Gastrocnemius medialis (tissue), 4 donors: ENCODE measurements at regions of chr11 and their contacts with region 1.

Region 1: GRCh38 chr11:16605894-16606783 is 132.3 kb upstream of the C11orf58 start:
- DNase-seq: peak; percentile 90 to 92
- ATAC-seq: peak; percentile 52 to 54
- H3K4me3 ChIP-seq: peak overlapping the region; percentile 70 to 98 (median 94)
- H3K27ac ChIP-seq: peak overlapping the region; percentile 91 to 99 (median 96)
- H3K4me1 ChIP-seq: peaks cover 14 to 33% of the 10 kb centered on the region in 2 donors
- H3K27me3 ChIP-seq: peaks cover 0 to 3% (median 0%) of the 10 kb centered on the region in 3 donors
- CTCF ChIP-seq: peak; percentile 96 to 98 (median 97)
- POLR2A ChIP-seq: peak; percentile 81 to 89

Region 2: GRCh38 chr11:15819679-15820286 is 786.4 kb before region 1 on chr11:
- in situ Hi-C with region 1: loop called in 1 of 4 experiments (anchors 25 kb)
- intact Hi-C with region 1: loop called (anchors 10 kb)
- DNase-seq: peak; percentile 55 to 64
- ATAC-seq: peak; percentile 74 to 83
- H3K4me3 ChIP-seq: no peak overlapping the region
- H3K27ac ChIP-seq: no peak overlapping the region
- H3K4me1 ChIP-seq: peaks cover 33 to 46% of the 10 kb centered on the region in 2 donors
- H3K27me3 ChIP-seq: no peaks in the 10 kb centered on the region
- CTCF ChIP-seq: peak; percentile 66 to 95 (median 82)
- POLR2A ChIP-seq: no peak

Region 3: GRCh38 chr11:16012125-16012751 is 593.9 kb before region 1 on chr11:
- in situ Hi-C with region 1: no loop called
- intact Hi-C with region 1: loop called (anchors 2 kb)
- DNase-seq: peak; percentile 59 to 72
- ATAC-seq: peak; percentile 96
- H3K4me3 ChIP-seq: no peak overlapping the region
- H3K27ac ChIP-seq: peak overlapping the region; percentile 78 to 83 (median 80)
- H3K4me1 ChIP-seq: peaks cover 49 to 51% of the 10 kb centered on the region in 2 donors
- H3K27me3 ChIP-seq: no peaks in the 10 kb centered on the region
- CTCF ChIP-seq: no peak
- POLR2A ChIP-seq: peak; percentile 41 to 74

Region 4: DNA sequence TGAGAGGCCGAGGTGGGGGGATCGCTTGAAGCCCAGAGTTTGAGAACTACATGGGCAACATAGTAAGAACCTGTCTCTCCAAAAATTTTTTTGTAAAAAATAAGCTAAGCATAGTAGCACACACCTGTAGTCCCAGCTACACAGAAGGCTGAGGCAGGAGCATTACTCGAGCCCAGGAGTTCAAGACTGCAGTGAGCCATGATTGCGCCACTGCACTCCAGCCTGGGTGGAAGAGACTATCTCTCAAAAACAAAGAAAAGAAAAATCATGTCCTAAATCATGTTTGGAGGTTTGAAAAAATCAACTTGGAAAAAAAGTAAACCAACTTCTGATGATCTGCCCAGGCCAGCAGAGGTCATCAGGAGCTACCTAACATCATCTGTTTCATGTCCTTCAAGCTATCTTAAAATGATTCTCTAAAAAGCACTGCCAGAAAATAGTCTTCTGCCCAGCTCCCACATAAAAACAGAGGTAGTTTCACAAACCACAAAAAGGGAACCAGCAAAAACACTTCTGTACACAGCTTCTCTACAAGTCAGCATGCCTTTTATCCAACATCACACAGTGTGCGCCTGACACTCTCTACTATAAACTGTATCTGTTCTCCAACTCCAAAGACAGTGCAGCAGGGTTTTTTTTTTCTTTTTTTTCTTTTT is 414.8 kb before region 1 on chr11:
- in situ Hi-C with region 1: loop called (anchors 10 to 25 kb)
- intact Hi-C with region 1: loop called (anchors 2 kb)
- DNase-seq: no peak
- ATAC-seq: no peak
- H3K4me3 ChIP-seq: no peak overlapping the region
- H3K27ac ChIP-seq: no peak overlapping the region
- H3K4me1 ChIP-seq: peaks cover 32 to 39% of the 10 kb centered on the region in 2 donors
- H3K27me3 ChIP-seq: no peaks in the 10 kb centered on the region
- CTCF ChIP-seq: peak in 1 of 5 experiments; percentile 27
- POLR2A ChIP-seq: no peak

Region 5: DNA sequence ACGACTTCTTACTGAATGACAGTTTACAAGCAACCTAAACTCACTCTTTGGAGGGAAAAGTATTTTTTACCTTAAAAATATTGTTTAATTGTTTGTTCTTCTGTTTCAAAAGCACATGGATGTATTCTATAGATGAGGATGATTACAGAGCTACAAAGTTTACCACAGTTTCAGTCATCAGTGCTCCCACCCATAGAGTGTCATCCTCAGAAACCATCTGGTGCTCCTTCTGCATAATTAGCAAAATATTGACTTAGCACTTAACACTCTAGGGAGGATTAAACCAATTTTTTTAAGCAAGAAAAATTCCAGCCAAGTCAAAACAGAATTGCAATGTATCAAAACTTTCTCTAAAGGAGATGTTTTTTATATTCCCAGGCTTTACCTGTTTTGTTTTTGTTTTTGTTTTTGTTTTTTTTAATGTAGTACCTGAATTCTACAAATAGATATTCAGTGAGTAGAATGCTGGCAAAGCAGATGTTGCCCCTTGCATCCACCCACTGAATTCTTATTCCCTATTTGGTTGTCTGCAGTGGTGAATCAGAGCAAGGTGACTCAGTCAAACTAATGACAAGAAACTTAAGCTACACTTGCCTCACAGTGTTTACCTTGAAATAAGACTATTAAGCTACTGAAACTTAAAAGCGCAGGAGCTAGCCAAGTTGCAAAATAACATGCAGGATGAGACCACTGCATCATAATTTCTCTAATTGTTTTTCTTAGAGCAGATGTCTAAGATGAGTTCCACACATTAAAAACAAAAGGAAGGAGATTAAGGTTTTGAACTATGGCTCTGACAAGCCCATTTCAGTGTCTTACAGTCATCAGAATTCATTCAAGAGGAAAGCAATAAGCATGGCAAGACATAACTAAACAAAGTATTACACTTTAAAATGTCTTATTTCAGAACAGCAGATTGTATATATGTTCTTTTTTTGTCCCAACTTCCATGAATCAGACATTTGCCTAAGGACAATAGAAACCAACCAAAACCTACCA is 94.7 kb before region 1 on chr11:
- in situ Hi-C with region 1: no loop called
- intact Hi-C with region 1: loop called (anchors 2 kb)
- DNase-seq: no peak
- ATAC-seq: peak; percentile 94 to 97
- H3K4me3 ChIP-seq: no peak overlapping the region
- H3K27ac ChIP-seq: peak overlapping the region; percentile 57 to 86 (median 76)
- H3K4me1 ChIP-seq: peaks cover 30 to 34% of the 10 kb centered on the region in 2 donors
- H3K27me3 ChIP-seq: no peaks in the 10 kb centered on the region
- CTCF ChIP-seq: no peak
- POLR2A ChIP-seq: no peak

Region 6: DNA sequence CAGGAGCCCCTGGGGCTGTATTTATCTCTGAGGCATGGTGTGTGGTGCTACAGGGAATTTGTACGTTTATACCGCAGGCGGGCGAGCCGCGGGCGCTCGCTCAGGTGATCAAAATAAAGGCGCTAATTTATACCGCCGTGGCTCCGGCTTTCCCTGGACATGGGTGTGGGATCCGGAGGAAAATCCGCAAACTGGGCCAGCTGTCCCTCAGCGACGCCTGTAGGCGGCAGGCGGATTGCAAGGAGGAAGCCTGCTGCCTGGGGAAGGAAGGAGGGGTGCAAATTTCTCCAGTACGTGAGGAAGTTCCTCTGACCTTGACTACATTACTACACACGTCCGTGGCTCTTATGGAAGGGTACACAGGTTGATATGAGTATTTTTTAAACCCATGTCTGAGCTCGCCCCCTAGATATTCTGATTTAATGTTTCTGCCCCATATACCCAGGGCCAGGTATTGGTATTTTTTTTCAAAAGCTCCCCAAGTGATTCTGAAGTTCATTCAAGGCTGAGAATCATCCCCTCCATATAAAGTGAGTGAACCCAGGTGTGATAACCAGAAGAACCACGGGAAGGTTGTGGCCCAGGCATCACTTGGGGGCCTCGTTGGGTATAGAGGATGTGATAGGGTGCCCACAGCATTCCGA is 1116.0 kb after region 1 on chr11:
- in situ Hi-C with region 1: no loop called
- intact Hi-C with region 1: loop called (anchors 10 kb)
- DNase-seq: peak; percentile 54 to 76
- ATAC-seq: peak in 1 of 2 donors; percentile 21
- H3K4me3 ChIP-seq: peak overlapping the region; percentile 61 to 69 (median 65)
- H3K27ac ChIP-seq: peak overlapping the region; percentile 93 to 99 (median 96)
- H3K4me1 ChIP-seq: peaks cover 8 to 21% of the 10 kb centered on the region in 2 donors
- H3K27me3 ChIP-seq: no peaks in the 10 kb centered on the region
- CTCF ChIP-seq: peak; percentile 52 to 69 (median 57)
- POLR2A ChIP-seq: no peak